ENCODE measurements at regions of chrX and their contacts with region 1.

Region 1: DNA sequence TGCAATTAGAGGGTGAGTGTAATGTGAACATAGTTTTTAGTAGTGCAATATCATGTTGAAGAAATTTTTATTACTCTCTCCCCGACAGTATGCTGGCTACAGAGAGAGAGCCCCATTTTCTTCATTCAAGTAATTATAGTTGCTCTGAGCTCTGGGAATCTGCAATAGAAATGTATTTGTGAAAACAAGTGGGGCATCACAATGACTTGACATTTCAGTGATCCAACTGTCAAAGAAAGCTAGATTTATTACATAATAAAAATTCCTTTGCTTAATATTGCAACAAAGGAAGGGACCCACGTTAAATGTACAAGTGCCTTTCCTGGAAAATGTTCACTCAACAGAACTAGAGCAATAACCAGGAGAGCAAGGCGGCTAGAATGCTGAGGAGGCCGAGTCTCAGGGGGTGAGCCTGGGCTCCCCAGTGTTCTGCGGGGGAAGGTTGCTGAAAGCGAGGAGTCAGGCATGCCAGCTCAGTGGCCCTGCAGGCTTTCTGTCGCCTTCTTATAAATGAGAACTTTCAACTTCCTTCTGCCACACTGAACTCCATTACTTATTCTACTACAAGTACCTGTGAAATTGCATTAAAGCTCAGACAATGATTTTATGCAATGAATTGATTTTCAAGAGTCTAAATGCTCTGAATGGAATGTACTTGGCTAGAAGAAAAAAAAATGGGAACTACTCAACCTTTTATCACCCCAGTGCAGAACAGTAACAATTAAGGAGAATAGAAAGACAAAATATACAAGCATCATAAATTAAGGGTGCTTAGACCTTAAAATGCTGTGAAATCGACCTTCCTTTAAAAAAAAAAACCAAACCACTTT is 476.4 kb downstream of the AFF2 start:
- DNase-seq: no peak
- H3K4me3 ChIP-seq: no peak overlapping the region
- CTCF ChIP-seq: no peak
- POLR2A ChIP-seq: no peak

Region 2: DNA sequence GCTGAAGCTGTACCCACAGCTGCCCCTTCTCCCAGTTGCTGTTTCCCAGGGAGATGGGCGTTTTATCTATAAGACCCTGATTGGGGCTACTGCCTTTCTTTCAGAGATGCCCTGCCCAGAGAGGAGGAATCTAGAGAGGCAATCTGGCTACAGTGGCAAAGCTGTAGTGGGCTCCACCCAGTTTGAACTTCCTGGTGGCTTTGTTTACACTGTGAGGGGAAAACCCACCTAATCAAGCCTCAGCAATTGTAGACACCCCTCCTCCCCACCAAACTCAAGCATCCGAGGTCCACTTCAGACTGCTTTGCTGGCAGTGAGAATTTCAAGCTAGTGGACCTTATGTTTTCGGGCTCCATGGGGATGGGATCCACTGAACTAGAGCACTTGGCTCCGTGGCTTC is 716.8 kb before region 1 on chrX:
- intact Hi-C with region 1: loop called (anchors 5 kb)
- DNase-seq: no peak
- H3K4me3 ChIP-seq: no peak overlapping the region
- CTCF ChIP-seq: no peak
- POLR2A ChIP-seq: no peak

Region 3: DNA sequence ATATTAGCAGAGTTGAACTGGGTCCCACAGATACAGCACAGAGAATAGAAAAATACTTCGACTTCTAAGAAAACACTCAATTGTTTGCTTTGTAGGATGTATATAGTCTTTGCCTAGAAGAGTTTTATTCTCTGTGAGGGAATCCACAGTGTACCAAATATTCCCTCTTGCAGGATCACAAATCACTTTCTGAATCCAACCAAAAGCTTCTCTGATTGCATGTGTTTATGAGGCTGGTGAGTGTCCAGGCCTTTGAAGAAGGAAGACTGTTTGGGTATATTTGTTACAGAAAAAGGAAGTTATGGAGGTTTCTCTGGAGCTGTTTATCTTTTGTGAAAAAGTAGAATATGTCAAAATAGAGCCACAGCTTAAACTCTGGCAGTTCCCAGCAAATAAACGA is 53.2 kb before region 1 on chrX:
- intact Hi-C with region 1: no loop called
- DNase-seq: no peak
- H3K4me3 ChIP-seq: no peak overlapping the region
- CTCF ChIP-seq: no peak
- POLR2A ChIP-seq: no peak

Measured in lower leg skin (tissue), 4 donors.